Aorta (tissue), 5 donors: ENCODE measurements at regions of chr19 and their contacts with region 1.

Region 1: DNA sequence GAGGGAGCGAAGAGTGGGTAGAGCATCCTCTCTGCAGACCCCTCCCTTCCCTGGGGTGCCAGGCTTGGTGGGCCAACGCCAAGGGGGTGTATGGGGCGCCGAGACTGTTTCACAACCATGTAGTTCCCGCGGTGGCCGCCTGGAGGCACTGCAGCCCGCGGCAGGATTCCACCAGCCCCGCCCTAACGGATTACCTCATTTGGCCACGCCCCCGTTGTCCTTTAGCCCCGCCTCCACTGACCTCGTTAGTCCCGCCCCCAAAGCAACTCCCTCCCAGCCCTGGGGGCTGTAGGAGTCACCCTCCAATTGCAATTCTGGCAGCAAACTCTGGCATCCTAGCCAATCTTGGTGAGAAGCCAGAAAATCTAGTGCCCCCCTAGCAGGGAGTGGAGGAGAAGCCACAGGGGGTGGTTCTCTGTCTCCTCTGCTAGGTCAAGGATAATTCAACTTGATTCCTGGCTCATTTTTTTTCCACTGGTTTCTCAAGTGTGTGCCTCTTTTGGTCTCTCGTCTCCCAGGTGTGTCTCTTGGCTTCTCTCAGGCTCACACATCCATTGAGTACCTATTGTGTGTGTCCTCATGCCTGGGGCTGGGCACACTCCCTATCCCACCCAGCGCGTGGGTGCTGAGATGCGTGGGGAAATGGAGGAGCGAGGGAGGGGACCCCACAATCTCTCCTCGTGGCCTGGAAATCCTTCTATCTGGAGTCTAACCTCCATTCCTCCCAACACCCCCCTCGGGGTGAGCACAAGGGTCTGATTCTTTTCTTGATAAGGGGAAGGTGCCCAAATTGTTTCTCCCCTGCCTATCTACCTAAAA is 2.0 kb downstream of the OLFM2 start:
- DNase-seq: peak; percentile 70 to 91
- ATAC-seq: peak; percentile 78
- H3K4me3 ChIP-seq: no peak overlapping the region
- H3K27ac ChIP-seq: no peak overlapping the region
- H3K4me1 ChIP-seq: no peaks in the 10 kb centered on the region
- H3K27me3 ChIP-seq: no peaks in the 10 kb centered on the region

Region 2: DNA sequence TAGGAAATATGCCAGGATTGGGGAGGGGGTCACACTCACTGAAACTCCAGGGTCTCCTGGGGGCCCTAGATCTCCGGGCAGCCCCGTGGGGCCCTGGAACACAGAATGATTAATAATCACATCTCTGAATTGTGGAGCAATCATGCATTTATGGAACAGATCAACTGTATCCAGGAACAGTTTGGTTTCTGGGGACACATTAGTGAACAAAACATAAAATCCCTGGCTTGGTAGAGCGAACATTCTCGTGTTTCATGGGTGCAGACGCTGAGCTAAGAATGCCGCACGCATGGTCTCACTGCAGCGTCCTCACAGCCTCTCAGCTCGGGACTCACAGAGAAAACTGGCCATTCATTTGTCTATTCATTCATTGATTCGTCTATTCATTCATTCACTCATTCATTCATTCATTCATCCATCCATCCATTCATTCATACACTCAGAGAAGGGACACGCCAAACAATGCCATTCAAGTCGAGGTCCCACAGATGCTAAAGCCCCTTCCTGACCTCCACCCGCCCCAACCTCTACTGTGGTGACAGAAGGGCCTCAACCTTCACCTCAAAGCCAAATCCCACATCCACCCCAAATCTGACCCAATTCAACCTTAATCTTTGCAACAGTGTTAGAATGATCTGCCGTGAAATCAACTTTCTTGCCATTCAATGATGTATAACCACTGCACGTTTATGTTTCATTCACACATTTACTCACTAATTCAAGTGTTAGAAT is 37.0 kb after region 1 on chr19:
- intact Hi-C with region 1: no loop called
- DNase-seq: no peak
- ATAC-seq: no peak
- H3K4me3 ChIP-seq: no peak overlapping the region
- H3K27ac ChIP-seq: no peak overlapping the region
- H3K4me1 ChIP-seq: no peaks in the 10 kb centered on the region
- H3K27me3 ChIP-seq: no peaks in the 10 kb centered on the region

Region 3: DNA sequence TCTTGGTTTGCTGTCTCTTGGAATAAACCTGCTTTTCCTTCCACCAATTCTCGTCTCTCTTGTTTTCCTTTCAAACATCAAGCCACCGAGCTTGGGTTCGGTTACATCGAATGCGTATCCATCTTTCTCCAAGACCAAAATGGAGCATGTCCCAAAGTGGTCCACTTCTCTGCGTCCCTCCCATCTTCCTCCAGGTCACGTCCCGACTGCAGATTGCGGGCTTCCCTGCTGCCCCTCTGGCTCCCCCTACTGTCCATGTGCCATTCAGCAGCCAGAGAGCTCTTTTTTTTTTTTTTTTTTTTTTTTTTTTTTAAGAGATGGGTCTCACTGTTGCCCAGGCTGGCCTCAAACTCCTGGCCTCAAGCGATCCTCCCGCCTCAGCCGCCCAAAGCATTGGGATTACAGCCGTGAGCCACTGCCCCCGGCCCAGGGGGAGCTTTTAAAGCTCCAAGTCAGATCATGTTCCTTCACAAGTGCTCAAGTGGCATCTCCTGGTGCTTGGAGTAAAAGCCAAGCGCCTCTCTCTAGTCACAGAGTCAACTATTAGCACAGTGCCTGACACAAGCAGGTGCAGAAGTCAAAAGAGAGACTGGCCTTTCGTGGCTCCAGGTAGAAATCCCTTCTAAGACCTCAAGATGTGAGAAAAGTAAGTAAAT is 66.0 kb after region 1 on chr19:
- intact Hi-C with region 1: loop called in 1 of 2 experiments (anchors 1 kb)
- DNase-seq: peak; percentile 78 to 83
- ATAC-seq: peak; percentile 71
- H3K4me3 ChIP-seq: no peak overlapping the region
- H3K27ac ChIP-seq: no peak overlapping the region
- H3K4me1 ChIP-seq: no peaks in the 10 kb centered on the region
- H3K27me3 ChIP-seq: no peaks in the 10 kb centered on the region

Region 4: GRCh38 chr19:10010247-10010691 is 75.9 kb after region 1 on chr19 and contains the start of gene COL5A3:
- intact Hi-C with region 1: loop called in 1 of 2 experiments (anchors 5 kb)
- DNase-seq: peak; percentile 65 to 83
- ATAC-seq: peak; percentile 21
- H3K4me3 ChIP-seq: peak within 1 kb of the TSS in 1 of 2 donors; percentile 9
- H3K27ac ChIP-seq: no peak within 1 kb of the TSS
- H3K4me1 ChIP-seq: peaks cover 0 to 4% of the 10 kb centered on the region in 2 donors
- H3K27me3 ChIP-seq: no peaks in the 10 kb centered on the region
- total RNA-seq, gene COL5A3: 8.2 to 13.3 TPM

Region 5: GRCh38 chr19:10027158-10027693 is 92.9 kb after region 1 on chr19:
- intact Hi-C with region 1: loop called (anchors 1 to 2 kb)
- DNase-seq: no peak
- ATAC-seq: no peak
- H3K4me3 ChIP-seq: no peak overlapping the region
- H3K27ac ChIP-seq: no peak overlapping the region
- H3K4me1 ChIP-seq: no peaks in the 10 kb centered on the region
- H3K27me3 ChIP-seq: no peaks in the 10 kb centered on the region

Region 6: GRCh38 chr19:10112895-10113591 is 178.7 kb after region 1 on chr19:
- intact Hi-C with region 1: loop called in 1 of 2 experiments (anchors 10 kb)
- DNase-seq: peak; percentile 65 to 87
- ATAC-seq: no peak
- H3K4me3 ChIP-seq: no peak overlapping the region
- H3K27ac ChIP-seq: no peak overlapping the region
- H3K4me1 ChIP-seq: no peaks in the 10 kb centered on the region
- H3K27me3 ChIP-seq: no peaks in the 10 kb centered on the region

Region 7: GRCh38 chr19:10251792-10252694 is 317.7 kb after region 1 on chr19 and contains the start of gene MRPL4:
- intact Hi-C with region 1: loop called (anchors 2 to 5 kb)
- DNase-seq: peak; percentile 97 to 98
- ATAC-seq: peak; percentile 96
- H3K4me3 ChIP-seq: peak within 1 kb of the TSS; percentile 37 to 78
- H3K27ac ChIP-seq: no peak within 1 kb of the TSS
- H3K4me1 ChIP-seq: no peaks in the 10 kb centered on the region
- H3K27me3 ChIP-seq: no peaks in the 10 kb centered on the region
- total RNA-seq, gene MRPL4: 22.7 to 25.4 TPM